Common myeloid progenitor, CD34-positive (primary cell): ENCODE measurements at regions of chr4 and their contacts with region 1.

Region 1: DNA sequence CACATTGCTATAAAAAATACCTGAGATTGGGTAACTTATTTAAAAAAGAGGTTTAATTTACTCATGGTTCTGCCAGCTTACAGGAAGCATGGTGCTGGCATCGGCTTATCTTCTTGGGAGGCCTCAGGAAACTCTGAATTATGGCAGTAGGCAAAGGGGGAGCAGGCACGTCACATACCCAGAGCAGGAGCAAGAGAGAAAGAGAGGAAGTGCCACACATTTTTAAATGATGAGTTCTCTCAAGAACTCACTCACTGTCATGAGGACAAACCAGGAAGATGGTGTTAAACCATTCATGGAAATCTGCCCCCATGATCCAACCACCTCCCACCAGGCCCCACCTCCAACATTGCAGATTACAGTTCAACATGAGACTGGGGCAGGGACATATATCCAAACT is 10.0 kb upstream of the AFF1 start:
- DNase-seq: peak in 2 of 3 donors; percentile 67 to 84
- H3K4me3 ChIP-seq: no peak overlapping the region
- H3K27ac ChIP-seq: peak overlapping the region in 1 of 2 experiments; percentile 19
- H3K4me1 ChIP-seq: peaks cover 13 to 54% (median 35%) of the 10 kb centered on the region in 4 experiments
- H3K27me3 ChIP-seq: no peaks in the 10 kb centered on the region

Region 2: DNA sequence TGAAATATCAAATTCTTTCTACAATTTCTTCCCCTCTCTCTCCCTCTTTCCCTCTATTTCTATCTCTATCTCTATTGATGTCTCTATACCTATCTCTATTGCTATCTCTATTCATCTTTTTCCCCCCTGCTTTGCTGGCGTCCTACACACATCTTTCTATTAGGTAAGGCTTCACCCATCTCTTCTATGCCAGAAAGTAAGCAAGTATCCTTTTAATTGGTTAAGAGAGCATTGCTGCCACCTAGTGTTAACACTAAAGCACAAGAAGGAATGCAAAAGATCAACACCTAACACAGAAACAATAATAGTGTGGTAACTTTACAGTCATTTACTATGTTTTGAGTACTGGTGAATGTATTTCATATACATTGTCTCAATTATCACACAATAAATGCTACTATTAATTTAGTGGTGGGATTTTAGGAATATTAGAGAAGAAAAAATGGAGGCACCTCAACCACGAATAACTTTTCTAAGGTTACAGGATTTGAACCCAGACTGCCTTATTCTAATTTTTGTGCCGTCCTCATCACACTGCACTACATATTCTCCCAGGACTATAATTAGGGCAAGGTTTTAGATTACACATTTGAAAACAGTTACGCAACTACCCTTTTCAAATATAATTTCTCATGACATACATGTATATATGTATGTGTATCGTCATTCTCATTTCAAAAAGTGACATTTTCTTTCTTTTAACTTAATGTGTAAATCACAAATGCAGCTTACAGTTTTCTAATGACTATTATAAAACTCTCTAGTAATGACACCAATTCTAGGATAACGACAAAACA is 28.9 kb before region 1 on chr4:
- CTCF ChIA-PET with region 1: interaction called, 11 read pairs
- POLR2A ChIA-PET with region 1: no interaction called
- DNase-seq: peak; percentile 68 to 85 (median 82)
- H3K4me3 ChIP-seq: no peak overlapping the region
- H3K27ac ChIP-seq: no peak overlapping the region
- H3K4me1 ChIP-seq: peaks cover 0 to 12% (median 11%) of the 10 kb centered on the region in 4 experiments
- H3K27me3 ChIP-seq: peaks cover 0 to under 1% (median 0%) of the 10 kb centered on the region in 5 experiments

Region 3: DNA sequence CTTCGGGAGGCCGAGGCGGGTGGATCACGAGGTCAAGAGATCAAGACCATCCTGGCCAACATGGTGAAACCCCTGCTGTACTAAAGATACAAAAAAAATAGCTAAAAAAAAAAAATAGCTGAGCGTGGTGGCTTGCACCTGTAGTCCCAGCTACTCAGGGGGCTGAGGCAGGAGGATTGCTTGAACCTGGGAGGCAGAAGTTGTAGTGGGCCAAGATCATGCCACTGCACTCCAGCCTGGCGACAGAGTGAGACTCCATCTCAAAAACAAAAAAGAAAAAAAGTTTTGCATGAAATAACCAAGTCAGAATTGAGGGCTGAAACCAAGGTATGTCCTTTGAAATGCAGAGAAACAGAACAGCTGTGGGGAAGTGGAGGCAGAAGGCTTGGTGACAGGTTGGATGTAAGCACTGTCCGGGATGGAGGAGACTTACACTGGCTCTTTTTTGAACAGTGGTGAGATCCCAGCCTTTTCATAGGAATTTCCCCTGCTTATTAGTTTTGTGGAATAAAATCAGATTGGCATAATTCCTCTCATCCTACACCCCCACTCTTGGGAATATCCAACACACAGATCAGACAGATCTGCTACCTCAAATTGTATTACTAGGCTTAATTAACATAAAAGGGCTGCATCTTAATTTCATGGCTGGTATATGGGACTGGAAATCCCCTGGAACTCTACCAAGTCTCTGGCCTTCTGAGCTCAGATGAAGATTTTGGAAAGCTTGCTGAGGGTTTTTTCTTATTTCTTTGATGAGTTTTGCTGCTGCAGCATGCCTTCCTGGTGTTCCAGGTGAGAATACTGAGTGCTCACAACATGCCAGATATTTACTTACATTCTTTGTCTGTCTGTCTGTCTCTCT is 13.8 kb before region 1 on chr4:
- CTCF ChIA-PET with region 1: interaction called, 51 read pairs
- POLR2A ChIA-PET with region 1: no interaction called
- DNase-seq: peak in 2 of 3 donors; percentile 61 to 68
- H3K4me3 ChIP-seq: no peak overlapping the region
- H3K27ac ChIP-seq: no peak overlapping the region
- H3K4me1 ChIP-seq: peaks cover 3 to 44% (median 33%) of the 10 kb centered on the region in 4 experiments
- H3K27me3 ChIP-seq: no peaks in the 10 kb centered on the region

Region 4: DNA sequence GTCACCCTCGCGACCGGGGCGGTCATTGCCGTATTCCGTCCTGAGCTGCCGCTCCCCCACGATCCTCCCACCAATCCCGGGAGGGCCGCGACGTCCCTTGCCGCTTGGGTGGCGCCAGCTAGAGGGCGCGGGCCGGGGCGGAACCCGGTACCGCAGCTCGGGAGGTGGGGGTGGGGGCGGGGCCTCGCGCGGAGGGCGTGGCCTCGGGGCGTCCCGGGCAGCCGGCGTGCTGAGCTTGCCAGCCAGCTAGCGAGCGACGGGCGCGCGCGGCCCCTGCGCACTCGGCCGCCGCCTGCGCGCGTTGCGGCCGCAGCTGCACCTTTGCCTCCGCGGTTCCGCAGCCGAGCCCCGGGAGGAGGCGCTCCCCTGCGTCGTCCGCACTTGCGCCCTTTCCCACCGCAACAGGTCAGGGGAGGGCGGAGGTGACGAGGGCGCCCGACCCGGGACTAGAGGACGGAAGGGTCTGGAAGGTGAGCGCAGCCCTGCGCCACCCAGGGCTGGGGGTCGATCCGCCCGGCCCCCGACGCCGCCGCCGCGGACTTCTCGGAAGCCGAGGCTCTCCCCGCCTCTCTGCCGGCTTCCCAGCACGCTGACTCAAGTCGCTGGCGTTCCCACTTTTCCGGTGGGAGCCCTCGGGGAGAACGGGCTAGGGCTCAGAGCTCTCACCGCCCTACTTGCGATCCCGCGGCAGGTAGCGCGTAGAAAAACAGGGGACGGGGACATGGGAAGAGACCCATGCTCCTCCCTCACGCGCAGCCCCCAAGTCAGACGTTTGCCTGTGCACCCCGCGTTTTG is 10.2 kb after region 1 on chr4 and contains the start of gene AFF1:
- CTCF ChIA-PET with region 1: interaction called, 53 read pairs
- POLR2A ChIA-PET with region 1: interaction called, 6 read pairs
- DNase-seq: peak; percentile 98
- H3K4me3 ChIP-seq: peak within 1 kb of the TSS; percentile 79 to 97 (median 95)
- H3K27ac ChIP-seq: peak within 1 kb of the TSS; percentile 73 to 94
- H3K4me1 ChIP-seq: peaks cover 24 to 54% (median 41%) of the 10 kb centered on the region in 4 experiments
- H3K27me3 ChIP-seq: no peaks in the 10 kb centered on the region

Region 5: DNA sequence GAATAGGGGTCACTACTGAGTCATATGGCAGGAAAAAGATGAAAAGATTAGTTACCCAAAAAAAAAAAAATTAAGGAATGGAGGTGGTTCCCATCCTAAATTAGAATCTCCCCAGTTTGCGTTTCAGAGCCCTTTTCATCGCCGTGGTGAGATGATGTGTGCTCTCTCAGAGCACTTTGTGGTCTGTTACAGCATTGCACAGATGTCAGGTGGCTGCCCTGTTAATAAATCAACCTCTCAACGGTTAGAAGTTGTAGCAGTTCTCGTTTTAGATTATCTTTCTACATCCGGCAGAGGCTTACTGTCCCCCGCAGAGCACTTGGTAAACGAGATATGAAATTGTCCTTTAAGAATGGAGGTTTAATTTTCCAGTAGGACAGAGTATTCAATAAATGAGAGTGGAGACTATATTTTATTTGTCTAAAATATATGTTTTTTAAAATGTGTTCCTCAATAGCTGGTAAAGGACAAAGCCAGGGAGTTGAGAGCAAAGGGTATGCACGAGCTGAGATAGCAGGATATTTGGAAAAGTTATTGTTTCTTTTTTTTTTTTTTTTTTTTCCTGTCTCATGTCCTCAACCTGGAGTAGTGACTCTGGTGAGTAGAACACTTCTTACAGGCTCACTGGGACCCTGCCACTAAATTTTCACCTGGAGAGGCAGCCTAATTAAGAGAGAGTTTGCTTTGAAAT is 36.9 kb after region 1 on chr4:
- CTCF ChIA-PET with region 1: interaction called, 11 read pairs
- POLR2A ChIA-PET with region 1: no interaction called
- DNase-seq: peak; percentile 91 to 98 (median 96)
- H3K4me3 ChIP-seq: peak overlapping the region in 4 of 7 experiments; percentile 49 to 55 (median 52)
- H3K27ac ChIP-seq: peak overlapping the region; percentile 73 to 88
- H3K4me1 ChIP-seq: peaks cover 62 to 87% (median 75%) of the 10 kb centered on the region in 4 experiments
- H3K27me3 ChIP-seq: no peaks in the 10 kb centered on the region

Region 6: DNA sequence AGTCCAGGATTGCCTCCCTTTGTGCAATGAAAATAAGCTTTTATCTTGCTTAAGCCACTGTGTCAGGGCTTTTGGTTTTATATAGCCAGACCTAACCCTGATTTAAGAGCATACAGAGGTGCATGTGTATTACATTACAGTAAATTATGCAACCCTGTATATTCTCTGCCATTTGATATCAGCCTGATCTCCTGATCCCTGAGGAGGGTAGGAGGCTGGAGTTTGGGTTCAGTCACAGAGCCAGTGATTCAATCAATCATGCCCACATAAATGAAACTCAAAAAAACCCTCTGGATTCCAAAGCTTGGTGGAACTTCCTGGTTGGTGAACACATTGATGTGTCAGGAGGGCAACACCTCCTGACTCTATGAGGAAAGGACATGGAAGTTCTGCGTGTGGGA is 302.9 kb after region 1 on chr4:
- CTCF ChIA-PET with region 1: no interaction called
- POLR2A ChIA-PET with region 1: no interaction called
- DNase-seq: no peak
- H3K4me3 ChIP-seq: no peak overlapping the region
- H3K27ac ChIP-seq: no peak overlapping the region
- H3K4me1 ChIP-seq: no peaks in the 10 kb centered on the region
- H3K27me3 ChIP-seq: no peaks in the 10 kb centered on the region